GM18951 (cell line): ENCODE measurements at regions of chr3 and their contacts with region 1.

Region 1: GRCh38 chr3:69425261-69425660 is 39.4 kb upstream of the FRMD4B start:
- POLR2A ChIP-seq: no peak

Region 2: DNA sequence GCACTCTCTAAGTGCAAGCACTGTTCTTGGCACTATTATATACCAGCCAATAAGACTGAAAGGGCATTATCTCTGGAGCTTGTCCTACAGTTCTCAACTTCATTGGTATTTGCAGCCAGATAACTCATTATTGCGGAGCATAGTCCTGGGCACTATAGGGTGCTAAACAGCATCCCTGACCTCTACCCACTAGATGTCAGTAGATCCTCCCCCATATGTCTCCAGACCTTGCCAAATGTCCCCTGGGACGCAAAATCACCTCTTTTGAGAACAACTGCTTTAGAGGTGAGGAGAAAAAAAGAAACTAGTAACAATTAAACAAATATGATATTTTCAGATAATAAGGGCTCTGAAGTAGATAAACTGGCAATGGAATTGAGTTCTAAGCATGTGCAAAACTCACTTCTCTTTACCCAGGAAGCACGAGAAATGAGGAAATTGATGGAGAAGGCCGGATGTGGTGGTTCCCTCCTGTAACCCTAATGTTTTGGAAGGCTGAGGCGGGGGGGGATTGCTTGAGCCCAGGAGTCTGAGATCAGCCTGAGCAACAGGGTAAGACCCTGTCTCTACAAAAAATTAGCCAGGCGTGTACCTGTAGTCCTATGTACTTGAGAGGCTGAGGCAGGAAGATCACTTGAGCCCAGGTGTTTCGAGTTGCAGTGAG is 100.8 kb before region 1 on chr3:
- in situ Hi-C with region 1: loop called (anchors 10 kb)
- POLR2A ChIP-seq: no peak

Region 3: DNA sequence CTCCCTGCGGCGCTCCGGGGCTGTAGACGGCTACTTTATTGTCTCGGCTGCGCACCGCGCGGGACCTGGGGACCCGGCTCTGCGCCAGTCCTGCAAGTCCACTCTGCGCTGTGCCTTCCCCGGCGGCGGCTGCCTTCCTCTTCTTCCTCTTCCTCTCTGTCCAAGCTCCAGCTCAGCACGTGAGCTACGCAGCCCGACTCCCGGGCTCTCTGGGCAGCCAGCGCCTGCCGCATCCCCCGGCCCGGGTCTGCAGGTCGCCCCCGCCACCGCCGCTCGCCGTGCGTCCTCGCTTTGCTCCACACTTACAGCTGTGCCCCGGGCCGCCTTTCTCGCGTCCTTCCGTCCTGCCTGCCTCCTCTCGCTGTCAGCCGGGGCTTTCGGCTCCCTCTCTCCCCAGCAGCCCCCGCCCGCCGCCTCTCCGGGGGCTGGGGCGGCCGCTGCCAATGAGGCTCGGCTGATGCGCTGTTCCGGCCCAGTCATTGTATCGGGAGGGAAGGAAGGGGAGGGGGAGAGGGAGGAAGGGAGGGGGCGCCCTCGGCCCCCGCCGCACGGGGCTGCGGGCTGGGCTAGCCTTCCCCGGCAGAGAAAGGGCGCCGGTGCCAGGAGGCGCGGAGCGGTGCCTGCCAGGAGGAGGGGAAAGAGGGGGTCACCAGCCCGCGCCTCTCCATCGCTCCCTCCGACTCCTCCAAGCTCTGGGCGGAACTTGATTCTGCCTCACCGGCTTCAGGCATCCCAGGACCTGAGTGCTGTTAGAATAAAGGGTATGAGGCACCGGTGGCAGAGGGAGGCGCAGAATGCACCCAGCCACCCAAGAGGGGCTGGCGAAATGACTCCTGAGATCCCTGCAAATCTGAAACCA is 117.2 kb after region 1 on chr3:
- in situ Hi-C with region 1: no loop called
- POLR2A ChIP-seq: no peak